HEK293T (cell line): ENCODE measurements at regions of chr9 and their contacts with region 1.

Region 1: GRCh38 chr9:129712634-129713401 is 40.0 kb downstream of the PTGES start:
- DNase-seq: no peak

Region 2: GRCh38 chr9:129696938-129697650 is 15.7 kb before region 1 on chr9:
- CTCF ChIA-PET with region 1: no interaction called
- POLR2A ChIA-PET with region 1: interaction called, 16 read pairs
- DNase-seq: peak; percentile 79

Region 3: DNA sequence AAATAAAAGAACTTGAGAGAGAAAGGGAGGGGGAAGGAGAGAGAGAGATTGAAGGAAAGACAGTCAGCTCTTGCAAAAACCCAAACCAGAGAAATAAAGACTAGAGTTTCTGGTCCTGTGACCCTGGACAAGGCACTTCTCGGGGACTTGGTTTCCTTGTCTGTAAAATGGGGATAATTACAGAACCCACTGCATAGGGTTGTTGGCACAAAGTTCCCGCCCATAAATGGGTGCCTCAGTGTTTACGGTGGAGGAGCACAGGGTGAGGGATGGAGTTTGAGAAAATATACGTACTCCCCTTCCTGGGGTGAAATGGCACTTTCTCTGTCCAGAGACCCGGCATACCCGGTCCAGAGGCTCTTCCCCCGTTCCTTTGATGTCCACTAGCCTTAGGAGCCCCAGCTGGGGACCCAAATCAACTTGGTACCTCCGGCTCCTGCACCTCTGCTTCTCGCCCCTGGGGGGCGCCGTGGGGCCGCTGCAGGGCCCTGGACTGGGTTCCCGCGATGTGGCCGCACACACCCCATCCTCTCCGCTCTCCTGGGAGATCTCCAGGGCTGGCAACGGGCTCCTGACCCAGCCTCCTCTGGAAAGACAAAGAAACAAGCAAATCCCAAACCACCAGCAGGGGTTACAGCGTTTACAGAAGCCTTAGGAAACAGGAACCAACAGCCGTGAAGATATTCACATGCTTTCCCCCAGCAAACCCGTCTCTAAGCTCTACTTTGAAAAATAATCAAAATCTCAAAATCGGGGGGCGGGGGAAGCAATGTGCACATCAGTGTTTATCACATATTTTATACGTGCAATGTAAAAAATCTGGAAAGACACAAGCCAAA is 13.7 kb after region 1 on chr9:
- CTCF ChIA-PET with region 1: interaction called, 15 read pairs
- POLR2A ChIA-PET with region 1: interaction called, 10 read pairs
- DNase-seq: peak; percentile 93

Region 4: DNA sequence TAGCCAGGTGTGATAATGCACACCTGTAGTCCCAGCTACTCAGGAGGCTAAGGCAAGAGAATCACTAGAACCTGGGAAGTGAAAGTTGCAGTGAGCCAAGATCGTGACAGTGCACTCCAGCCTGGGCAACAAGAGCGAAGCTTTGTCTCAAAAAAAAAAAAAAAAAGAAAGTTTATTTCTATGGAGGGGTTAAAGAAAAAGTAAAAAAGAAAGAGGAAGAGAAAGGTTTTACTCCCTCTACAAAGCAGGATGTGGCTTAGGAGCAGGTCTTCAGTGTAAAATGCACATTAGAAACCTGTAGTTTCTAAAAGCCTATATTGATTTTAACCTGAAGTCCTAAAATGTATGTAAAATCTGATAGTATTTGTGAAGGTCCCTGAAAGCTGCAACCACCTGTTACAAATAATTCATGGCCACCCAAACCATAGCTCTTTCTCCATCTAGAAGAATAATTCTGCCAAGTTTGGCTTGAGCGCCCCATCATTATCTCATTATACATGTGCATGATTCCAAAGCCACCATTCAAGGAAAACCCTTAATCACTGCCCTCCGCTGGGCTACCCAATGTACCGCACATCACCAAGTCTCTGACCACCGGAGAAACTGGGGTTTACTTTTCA is 326.8 kb after region 1 on chr9:
- CTCF ChIA-PET with region 1: no interaction called
- POLR2A ChIA-PET with region 1: no interaction called
- DNase-seq: no peak